Mammary epithelial cell (primary cell): ENCODE measurements at regions of chrX and their contacts with region 1.

Region 1: GRCh38 chrX:100379388-100379986 is 30.6 kb downstream of the PCDH19 start:
- DNase-seq: peak; percentile 36
- H3K4me3 ChIP-seq: no peak overlapping the region
- H3K27ac ChIP-seq: no peak overlapping the region
- H3K4me1 ChIP-seq: no peaks in the 10 kb centered on the region
- H3K27me3 ChIP-seq: no peaks in the 10 kb centered on the region
- CTCF ChIP-seq: peak; percentile 69 to 70

Region 2: DNA sequence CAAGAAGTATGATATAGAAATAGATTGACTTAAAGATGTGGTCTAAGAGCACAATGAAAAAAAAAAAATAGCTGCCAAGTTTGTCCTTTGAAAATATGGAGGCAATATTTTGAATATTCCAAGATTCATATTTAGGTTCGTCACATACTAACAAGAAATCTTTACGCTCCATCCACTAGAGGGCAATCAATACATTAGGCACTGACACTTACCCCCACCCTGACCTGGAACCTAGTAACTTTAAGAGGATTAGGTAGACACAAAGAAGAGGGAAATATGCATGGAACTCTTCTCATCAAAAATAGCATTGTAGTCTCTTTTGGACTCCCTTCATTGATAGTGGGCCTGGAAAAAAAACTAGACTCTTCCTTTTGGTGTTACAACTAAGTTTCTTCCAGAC is 1077.5 kb before region 1 on chrX:
- CTCF ChIA-PET with region 1: no interaction called
- dilution Hi-C with region 1: no loop called
- in situ Hi-C with region 1: no loop called
- intact Hi-C with region 1: loop called (anchors 2 kb)
- DNase-seq: no peak
- H3K4me3 ChIP-seq: no peak overlapping the region
- H3K27ac ChIP-seq: no peak overlapping the region
- H3K4me1 ChIP-seq: no peaks in the 10 kb centered on the region
- H3K27me3 ChIP-seq: no peaks in the 10 kb centered on the region
- CTCF ChIP-seq: peak; percentile 21 to 50

Region 3: DNA sequence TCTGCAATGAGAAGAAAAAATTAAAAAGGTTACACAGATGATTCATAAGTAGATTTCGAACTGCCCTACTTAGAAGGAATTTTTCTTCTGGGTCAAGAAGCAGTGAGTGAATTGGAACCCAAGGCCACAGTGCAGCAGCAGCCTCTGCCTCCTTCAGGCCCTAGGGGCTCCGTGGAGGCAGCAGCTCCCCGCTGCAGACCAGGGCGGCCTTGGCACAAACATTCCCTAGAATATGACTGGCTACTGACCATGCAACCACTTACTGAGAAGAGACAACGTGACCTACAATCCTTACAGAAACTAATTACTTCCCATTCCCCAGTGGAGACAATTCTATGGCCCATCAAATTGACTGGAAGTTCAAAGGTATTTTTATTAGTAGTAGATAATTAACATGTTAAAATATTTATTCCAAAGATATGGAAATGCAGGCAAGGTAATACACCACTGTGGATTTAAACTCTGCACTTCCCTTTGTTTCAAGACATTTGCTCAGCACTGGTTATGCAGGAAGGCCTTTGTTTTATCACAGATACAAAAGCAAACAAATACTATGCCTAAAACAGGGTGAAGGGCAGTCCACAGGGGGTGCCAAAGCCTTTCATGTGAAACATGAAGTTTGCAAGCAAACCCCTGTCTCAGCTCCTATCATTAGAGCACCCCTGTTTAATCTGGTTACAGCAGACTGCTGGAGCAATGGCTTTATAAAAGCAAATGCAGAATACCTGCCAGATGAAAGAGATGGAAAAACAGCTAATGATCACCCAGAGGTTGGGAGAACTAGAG is 28.6 kb before region 1 on chrX:
- CTCF ChIA-PET with region 1: no interaction called
- dilution Hi-C with region 1: no loop called
- in situ Hi-C with region 1: no loop called
- intact Hi-C with region 1: no loop called
- DNase-seq: no peak
- H3K4me3 ChIP-seq: no peak overlapping the region
- H3K27ac ChIP-seq: no peak overlapping the region
- H3K4me1 ChIP-seq: no peaks in the 10 kb centered on the region
- H3K27me3 ChIP-seq: peaks cover 6% of the 10 kb centered on the region
- CTCF ChIP-seq: no peak

Region 4: GRCh38 chrX:100445593-100445992 is 66.1 kb after region 1 on chrX:
- CTCF ChIA-PET with region 1: no interaction called
- dilution Hi-C with region 1: no loop called
- in situ Hi-C with region 1: no loop called
- intact Hi-C with region 1: no loop called
- DNase-seq: peak; percentile 2
- H3K4me3 ChIP-seq: no peak overlapping the region
- H3K27ac ChIP-seq: no peak overlapping the region
- H3K4me1 ChIP-seq: no peaks in the 10 kb centered on the region
- H3K27me3 ChIP-seq: no peaks in the 10 kb centered on the region
- CTCF ChIP-seq: no peak